ENCODE measurements at regions of chr20 and their contacts with region 1.

Region 1: DNA sequence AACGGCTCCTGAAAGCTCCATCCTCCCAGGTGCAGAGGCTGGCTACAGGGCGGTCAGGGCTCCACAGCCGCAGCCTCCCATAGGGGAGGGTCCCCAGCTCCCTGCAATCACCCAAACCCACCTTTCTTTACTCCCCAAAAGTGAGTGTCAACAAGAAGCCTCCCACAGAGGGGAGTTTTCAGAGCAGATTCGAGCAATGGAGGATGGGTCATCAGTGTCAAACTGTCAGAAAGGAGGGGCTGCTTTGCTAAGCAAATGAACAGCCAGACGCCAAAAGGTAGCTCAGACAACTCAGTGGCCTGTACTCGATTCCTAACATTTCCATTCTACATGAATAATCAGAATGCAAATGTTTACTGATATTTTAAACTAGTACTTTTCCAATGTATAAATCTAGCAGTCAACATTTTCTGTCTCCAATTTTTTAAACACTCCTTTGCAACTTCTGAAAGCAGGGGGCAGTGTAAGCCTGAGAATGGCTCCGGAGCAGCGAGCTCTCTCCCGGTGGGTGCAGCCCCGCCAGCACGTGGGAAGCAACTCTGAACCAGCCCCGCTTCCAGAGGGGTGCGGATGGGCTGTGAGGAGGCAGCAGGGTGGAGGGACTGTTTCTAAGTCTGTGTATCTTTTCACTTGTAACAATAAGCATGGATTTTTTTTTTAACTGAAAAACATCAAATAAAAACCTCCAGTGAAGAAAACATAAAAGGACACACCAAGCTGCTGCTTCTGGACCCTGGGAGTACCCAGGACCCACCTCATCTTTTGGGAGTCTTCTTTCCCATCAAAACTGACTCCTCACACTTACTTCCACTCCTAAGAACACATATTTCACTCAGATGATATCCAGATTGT is 54.9 kb downstream of the TAF4 start:
- DNase-seq: peak in 9 of 10 donors; percentile 23 to 93 (median 67)

Region 2: GRCh38 chr20:61925555-61926252 is 85.1 kb before region 1 on chr20:
- intact Hi-C with region 1: no loop called
- DNase-seq: peak in 5 of 10 donors; percentile 8 to 85 (median 79)

Region 3: GRCh38 chr20:62136283-62137091 is 125.7 kb after region 1 on chr20:
- intact Hi-C with region 1: loop called (anchors 1 kb)
- DNase-seq: peak in 9 of 10 donors; percentile 37 to 95 (median 68)

Region 4: DNA sequence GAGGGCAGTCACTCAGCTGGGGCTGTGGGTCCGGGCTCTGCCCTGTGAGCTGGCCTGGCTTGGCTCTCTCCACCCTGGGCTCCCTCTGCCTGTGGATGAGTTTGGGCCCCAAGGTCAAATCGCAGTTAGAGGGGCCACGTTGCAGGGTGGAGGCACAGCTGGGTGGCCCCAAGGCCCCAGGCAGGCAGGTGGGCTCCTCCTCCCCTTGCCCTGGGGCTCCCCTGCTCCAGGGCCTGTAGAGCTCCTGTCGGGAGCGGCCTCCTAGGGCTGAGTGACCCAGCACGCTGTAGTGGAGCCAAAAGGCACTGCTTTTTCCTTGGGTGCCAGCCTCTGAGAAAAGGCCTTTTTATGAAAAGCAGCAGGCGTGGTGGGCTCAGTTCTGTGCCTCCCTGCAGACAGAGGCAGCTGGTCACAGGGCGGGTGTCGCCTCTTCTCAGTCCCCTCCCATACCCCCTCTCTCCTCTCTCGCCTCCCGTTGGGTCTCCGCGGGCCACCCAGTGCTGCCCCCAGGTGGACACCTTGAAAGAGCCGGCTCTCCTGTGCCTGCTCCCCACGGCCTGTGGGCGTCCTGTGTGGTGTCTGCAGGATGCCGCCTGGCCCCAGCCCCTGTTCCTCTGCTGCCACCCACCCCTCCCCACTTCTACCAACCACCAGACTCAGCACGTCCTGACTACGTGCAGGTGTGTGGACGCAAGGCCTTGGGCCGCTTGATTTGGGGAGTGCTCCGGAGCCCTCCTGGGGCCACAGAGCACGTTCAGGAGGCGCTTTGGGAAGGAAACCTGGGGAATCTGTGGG is 146.0 kb after region 1 on chr20:
- intact Hi-C with region 1: loop called (anchors 5 kb)
- DNase-seq: peak in 8 of 10 donors; percentile 50 to 94 (median 66)

Measured in posterior cingulate gyrus (tissue), 11 donors.